ENCODE measurements at regions of chr3 and their contacts with region 1.

Region 1: GRCh38 chr3:46378426-46378942 is 7.7 kb downstream of the CCR5 start:
- DNase-seq: peak; percentile 42 to 79 (median 59)
- ATAC-seq: peak in 3 of 4 donors; percentile 50 to 78 (median 60)
- H3K4me3 ChIP-seq: no peak overlapping the region
- H3K27ac ChIP-seq: no peak overlapping the region
- H3K4me1 ChIP-seq: peaks cover 0 to 42% (median 3%) of the 10 kb centered on the region in 12 donors
- H3K27me3 ChIP-seq: peaks cover 0 to 9% (median 0%) of the 10 kb centered on the region in 9 donors
- CTCF ChIP-seq: peak; percentile 30 to 69 (median 54)
- POLR2A ChIP-seq: no peak

Region 2: GRCh38 chr3:45938864-45939263 is 439.6 kb before region 1 on chr3:
- intact Hi-C with region 1: loop called in 3 of 10 experiments (anchors 10 kb)
- DNase-seq: peak; percentile 69 to 85 (median 78)
- ATAC-seq: peak; percentile 64 to 89 (median 88)
- H3K4me3 ChIP-seq: no peak overlapping the region
- H3K27ac ChIP-seq: peak overlapping the region in 1 of 12 donors; percentile 28
- H3K4me1 ChIP-seq: peaks cover 0 to 41% (median 16%) of the 10 kb centered on the region in 12 donors
- H3K27me3 ChIP-seq: no peaks in the 10 kb centered on the region
- CTCF ChIP-seq: peak; percentile 78 to 90 (median 86)
- POLR2A ChIP-seq: no peak

Region 3: GRCh38 chr3:46208167-46208704 is 170.2 kb before region 1 on chr3 and contains the start of gene CCR1:
- intact Hi-C with region 1: no loop called
- DNase-seq: peak in 3 of 5 donors; percentile 29 to 51 (median 48)
- ATAC-seq: peak in 3 of 4 donors; percentile 55 to 64 (median 61)
- H3K4me3 ChIP-seq: peak within 1 kb of the TSS in 9 of 12 donors; percentile 7 to 63 (median 27)
- H3K27ac ChIP-seq: peak within 1 kb of the TSS in 6 of 12 donors; percentile 10 to 90 (median 24)
- H3K4me1 ChIP-seq: peaks cover 0 to 65% (median 0%) of the 10 kb centered on the region in 12 donors
- H3K27me3 ChIP-seq: no peaks in the 10 kb centered on the region
- CTCF ChIP-seq: peak in 7 of 12 donors; percentile 10 to 42 (median 21)
- POLR2A ChIP-seq: no peak
- total RNA-seq, gene CCR1: 1.2 to 52.6 (median 2.4) TPM

Region 4: DNA sequence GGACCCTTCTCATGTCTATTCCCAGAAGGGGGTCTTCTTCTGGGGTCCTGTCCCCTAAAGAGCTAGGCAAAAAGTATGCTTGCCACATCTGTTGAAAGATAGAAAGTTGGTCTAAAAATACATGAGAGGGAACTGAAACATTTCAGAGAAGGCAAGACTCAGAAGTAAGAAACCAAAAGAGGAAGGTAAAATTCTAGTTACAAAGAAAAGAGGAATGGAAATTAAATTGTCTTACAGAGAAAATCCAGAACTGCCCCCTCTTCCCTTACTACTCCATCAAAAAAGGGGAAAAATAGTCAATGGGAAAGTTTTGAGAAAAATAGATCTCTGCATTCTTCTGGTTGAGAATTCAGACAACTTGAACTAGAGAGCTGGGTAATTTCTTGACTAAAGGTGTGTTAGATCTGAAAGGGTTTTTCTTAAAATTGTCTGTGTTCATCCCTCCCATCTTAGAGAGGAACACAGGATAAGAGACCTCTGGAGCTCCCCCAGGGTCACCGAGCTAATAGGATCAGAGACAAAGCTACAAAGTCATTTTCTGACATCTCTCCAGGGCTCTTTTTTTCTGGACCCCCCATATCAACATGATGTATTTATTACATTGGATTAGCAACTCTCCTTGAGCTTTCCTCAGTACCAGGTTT is 56.9 kb before region 1 on chr3:
- intact Hi-C with region 1: no loop called
- DNase-seq: no peak
- ATAC-seq: no peak
- H3K4me3 ChIP-seq: no peak overlapping the region
- H3K27ac ChIP-seq: peak overlapping the region in 1 of 12 donors; percentile 76
- H3K4me1 ChIP-seq: peaks cover 0 to 44% (median 0%) of the 10 kb centered on the region in 12 donors
- H3K27me3 ChIP-seq: peaks cover 0 to 4% (median 0%) of the 10 kb centered on the region in 9 donors
- CTCF ChIP-seq: no peak
- POLR2A ChIP-seq: no peak

Region 5: GRCh38 chr3:46423588-46423987 is 45.1 kb after region 1 on chr3:
- intact Hi-C with region 1: loop called in 1 of 10 experiments (anchors 10 kb)
- DNase-seq: no peak
- ATAC-seq: no peak
- H3K4me3 ChIP-seq: no peak overlapping the region
- H3K27ac ChIP-seq: no peak overlapping the region
- H3K4me1 ChIP-seq: peaks cover 0 to 14% (median 0%) of the 10 kb centered on the region in 12 donors
- H3K27me3 ChIP-seq: no peaks in the 10 kb centered on the region
- CTCF ChIP-seq: no peak
- POLR2A ChIP-seq: no peak

Region 6: DNA sequence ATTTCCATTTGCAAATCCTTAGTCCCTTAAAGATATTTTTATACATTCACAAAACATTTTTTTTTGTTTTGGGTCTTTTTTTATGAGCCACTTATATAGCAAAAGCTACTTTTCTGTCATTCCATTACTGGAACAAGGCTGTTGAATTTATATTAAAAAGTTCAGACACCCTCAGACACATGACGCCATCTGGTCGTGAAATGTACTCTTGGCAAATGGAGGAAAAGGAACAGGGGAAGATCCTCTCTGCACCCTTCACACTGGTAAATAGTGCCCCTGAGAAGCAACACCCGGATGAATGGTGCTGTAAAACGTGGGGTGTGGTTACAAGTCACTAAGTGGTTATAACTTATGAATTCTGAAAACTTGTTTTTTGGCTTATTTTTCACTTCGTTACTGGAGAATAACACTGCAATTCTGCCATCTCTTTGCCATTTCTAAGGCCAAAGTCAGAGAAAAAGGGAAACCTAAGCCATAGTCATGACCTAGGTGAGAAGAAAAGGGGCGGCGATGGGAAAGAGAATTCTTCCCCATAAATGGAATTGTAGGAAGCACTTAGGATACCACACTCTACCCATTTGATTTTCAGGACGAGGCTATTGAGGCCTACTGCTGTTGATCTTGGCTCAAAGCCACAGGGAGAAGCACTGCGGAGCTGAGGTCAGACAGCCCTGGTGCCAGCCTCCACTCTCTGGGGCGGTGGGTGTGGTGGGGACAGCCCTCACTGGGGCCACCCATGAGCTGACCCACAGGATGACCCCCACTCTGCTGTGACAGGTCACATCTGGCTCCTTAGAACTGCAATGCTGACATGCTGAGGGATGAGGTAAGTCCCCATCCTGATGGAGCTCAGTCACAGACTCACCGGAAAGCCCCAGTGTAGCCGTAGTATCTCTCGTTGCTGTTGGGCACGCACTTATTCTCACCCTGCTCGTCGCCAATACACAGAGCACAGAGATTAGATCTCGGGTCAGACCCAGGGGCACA is 64.4 kb after region 1 on chr3:
- intact Hi-C with region 1: loop called in 1 of 10 experiments (anchors 10 kb)
- DNase-seq: no peak
- ATAC-seq: peak in 1 of 4 donors; percentile 16
- H3K4me3 ChIP-seq: no peak overlapping the region
- H3K27ac ChIP-seq: no peak overlapping the region
- H3K4me1 ChIP-seq: peaks cover 0 to 11% (median 0%) of the 10 kb centered on the region in 12 donors
- H3K27me3 ChIP-seq: no peaks in the 10 kb centered on the region
- CTCF ChIP-seq: peak in 5 of 12 donors; percentile 37 to 69 (median 51)
- POLR2A ChIP-seq: no peak

Measured in heart left ventricle (tissue), 16 donors.